ENCODE measurements at regions of chr6 and their contacts with region 1.

Region 1: GRCh38 chr6:42901536-42901957 is 14.3 kb upstream of the PTCRA start:
- DNase-seq: peak; percentile 70 to 85
- ATAC-seq: peak; percentile 97 to 99 (median 98)
- H3K4me3 ChIP-seq: no peak overlapping the region
- H3K27ac ChIP-seq: no peak overlapping the region
- H3K4me1 ChIP-seq: no peaks in the 10 kb centered on the region
- H3K27me3 ChIP-seq: no peaks in the 10 kb centered on the region
- CTCF ChIP-seq: peak; percentile 91

Region 2: DNA sequence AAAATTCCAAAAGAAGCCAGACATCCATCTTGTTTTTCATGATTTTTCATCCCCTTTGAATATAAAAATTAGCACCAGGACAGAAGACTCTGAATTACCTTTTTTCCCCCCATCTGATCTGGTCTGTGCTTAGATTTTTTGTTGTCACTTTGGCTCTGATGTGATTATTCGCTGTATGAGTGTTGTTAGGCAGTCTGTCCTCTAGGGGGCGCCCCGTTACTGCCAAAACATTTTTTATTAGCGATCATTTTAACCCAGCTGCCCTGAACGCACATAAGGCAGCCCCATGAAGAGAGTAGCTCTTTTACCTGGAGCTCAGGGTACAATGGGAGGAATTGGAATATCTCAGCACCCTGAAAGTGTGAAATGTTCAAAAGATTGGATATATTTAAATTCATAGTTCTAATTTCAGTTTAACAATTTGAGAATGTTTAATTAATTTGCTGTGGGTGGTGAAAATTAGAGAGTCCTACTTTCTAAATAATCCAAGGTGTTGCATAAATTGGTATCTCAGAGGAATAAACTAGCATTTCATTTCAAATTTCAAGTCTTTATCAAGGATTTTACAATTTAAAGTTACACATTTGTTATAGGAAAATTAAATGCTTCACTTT is 239.9 kb before region 1 on chr6:
- intact Hi-C with region 1: loop called in 1 of 2 experiments (anchors 5 kb)
- DNase-seq: peak; percentile 75 to 87
- ATAC-seq: peak; percentile 85 to 94 (median 92)
- H3K4me3 ChIP-seq: no peak overlapping the region
- H3K27ac ChIP-seq: no peak overlapping the region
- H3K4me1 ChIP-seq: no peaks in the 10 kb centered on the region
- H3K27me3 ChIP-seq: no peaks in the 10 kb centered on the region
- CTCF ChIP-seq: peak; percentile 91

Region 3: GRCh38 chr6:43143235-43144124 is 241.9 kb after region 1 on chr6:
- intact Hi-C with region 1: loop called (anchors 5 kb)
- DNase-seq: peak; percentile 86 to 93
- ATAC-seq: peak; percentile 92 to 96 (median 94)
- H3K4me3 ChIP-seq: peak overlapping the region; percentile 10
- H3K27ac ChIP-seq: peak overlapping the region; percentile 13
- H3K4me1 ChIP-seq: peaks cover 21% of the 10 kb centered on the region
- H3K27me3 ChIP-seq: no peaks in the 10 kb centered on the region
- CTCF ChIP-seq: peak; percentile 95

Region 4: GRCh38 chr6:43334466-43335095 is 433.0 kb after region 1 on chr6:
- intact Hi-C with region 1: loop called in 1 of 2 experiments (anchors 10 kb)
- DNase-seq: no peak
- ATAC-seq: peak; percentile 57 to 67 (median 62)
- H3K4me3 ChIP-seq: no peak overlapping the region
- H3K27ac ChIP-seq: peak overlapping the region; percentile 14
- H3K4me1 ChIP-seq: peaks cover 8% of the 10 kb centered on the region
- H3K27me3 ChIP-seq: no peaks in the 10 kb centered on the region
- CTCF ChIP-seq: peak; percentile 48

Measured in psoas muscle (tissue), 8 donors.